Transverse colon (tissue), 4 donors: ENCODE measurements at regions of chr17 and their contacts with region 1.

Region 1: DNA sequence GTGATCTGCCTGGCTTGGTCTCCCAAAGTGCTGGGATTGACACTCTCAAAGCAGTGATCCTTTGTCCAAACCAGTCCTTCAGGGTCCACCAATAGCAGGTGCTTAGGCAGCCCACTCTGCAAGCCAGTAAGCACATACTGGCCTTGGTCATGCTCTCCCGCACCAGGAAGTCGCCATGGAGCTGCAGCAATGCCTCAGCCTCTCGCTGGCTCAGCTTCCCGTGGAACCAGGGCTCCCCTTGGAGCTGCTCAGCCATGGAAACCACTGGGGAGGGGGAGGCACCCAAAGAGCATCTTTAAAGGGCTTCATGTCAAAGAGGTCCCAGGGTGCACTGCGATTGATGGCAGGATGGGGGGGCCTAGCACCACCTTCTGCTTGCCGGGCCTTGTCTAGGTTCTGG is 9.6 kb upstream of the UBTF start:
- DNase-seq: no peak
- H3K4me3 ChIP-seq: no peak overlapping the region
- H3K27ac ChIP-seq: no peak overlapping the region
- H3K4me1 ChIP-seq: peaks cover 0 to 7% (median 0%) of the 10 kb centered on the region in 4 donors
- H3K27me3 ChIP-seq: no peaks in the 10 kb centered on the region
- CTCF ChIP-seq: no peak
- EP300 ChIP-seq: no peak
- POLR2A ChIP-seq: no peak

Region 2: GRCh38 chr17:44314869-44315661 is 86.0 kb after region 1 on chr17:
- in situ Hi-C with region 1: no loop called
- intact Hi-C with region 1: loop called (anchors 5 kb)
- DNase-seq: peak; percentile 25
- H3K4me3 ChIP-seq: peak overlapping the region in 2 of 4 donors; percentile 17 to 46
- H3K27ac ChIP-seq: no peak overlapping the region
- H3K4me1 ChIP-seq: peaks cover 0 to 10% (median 6%) of the 10 kb centered on the region in 4 donors
- H3K27me3 ChIP-seq: peaks cover 52% of the 10 kb centered on the region
- CTCF ChIP-seq: no peak
- EP300 ChIP-seq: no peak
- POLR2A ChIP-seq: no peak